Heart right ventricle (tissue), 16 donors: ENCODE measurements at regions of chr5 and their contacts with region 1.

Region 1: DNA sequence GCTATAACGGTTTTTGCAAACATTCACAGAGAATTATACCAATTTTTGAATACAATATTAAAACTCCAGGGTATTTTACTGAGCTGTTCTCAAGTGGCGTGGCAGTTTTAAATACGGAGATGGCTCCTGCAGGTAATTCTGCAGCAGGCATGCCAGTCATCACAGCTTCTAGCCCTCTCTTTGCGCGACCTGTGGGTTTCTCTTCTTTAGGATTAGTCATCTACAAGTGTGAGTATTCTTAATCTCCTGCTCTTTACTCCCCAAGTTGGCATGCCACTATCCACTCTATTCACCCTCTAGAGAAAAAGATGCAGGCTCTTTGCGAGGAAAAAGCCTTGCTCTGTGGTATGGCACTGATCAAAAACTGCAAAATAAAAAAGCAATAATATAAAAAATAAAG is 43.9 kb downstream of the ANKRD31 start:
- DNase-seq: no peak
- ATAC-seq: no peak
- H3K4me3 ChIP-seq: no peak overlapping the region
- H3K27ac ChIP-seq: no peak overlapping the region
- H3K4me1 ChIP-seq: no peaks in the 10 kb centered on the region
- H3K27me3 ChIP-seq: no peaks in the 10 kb centered on the region
- CTCF ChIP-seq: no peak

Region 2: GRCh38 chr5:74786867-74787266 is 405.9 kb before region 1 on chr5:
- intact Hi-C with region 1: no loop called
- DNase-seq: no peak
- ATAC-seq: no peak
- H3K4me3 ChIP-seq: no peak overlapping the region
- H3K27ac ChIP-seq: no peak overlapping the region
- H3K4me1 ChIP-seq: no peaks in the 10 kb centered on the region
- H3K27me3 ChIP-seq: no peaks in the 10 kb centered on the region
- CTCF ChIP-seq: no peak

Region 3: DNA sequence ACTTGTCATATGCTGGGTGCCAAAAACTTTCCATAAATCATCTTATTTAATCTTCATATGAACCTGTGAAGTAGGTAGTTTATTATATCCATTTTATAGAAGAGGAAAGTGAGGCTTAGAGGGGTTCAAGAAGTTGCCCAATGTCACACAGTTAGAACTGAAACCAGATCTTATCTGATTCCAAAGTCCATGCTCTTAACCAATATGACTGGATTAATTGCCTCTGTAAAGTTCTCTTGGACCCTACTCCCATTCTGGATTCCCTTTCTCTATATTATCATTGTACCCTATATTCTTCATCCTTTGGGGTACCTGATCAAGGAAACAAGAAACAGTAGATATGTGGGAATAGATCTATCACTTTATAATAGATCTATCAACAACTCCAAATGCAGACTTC is 75.9 kb before region 1 on chr5:
- intact Hi-C with region 1: loop called in 1 of 10 experiments (anchors 2 kb)
- DNase-seq: no peak
- ATAC-seq: no peak
- H3K4me3 ChIP-seq: no peak overlapping the region
- H3K27ac ChIP-seq: no peak overlapping the region
- H3K4me1 ChIP-seq: no peaks in the 10 kb centered on the region
- H3K27me3 ChIP-seq: no peaks in the 10 kb centered on the region
- CTCF ChIP-seq: no peak

Region 4: DNA sequence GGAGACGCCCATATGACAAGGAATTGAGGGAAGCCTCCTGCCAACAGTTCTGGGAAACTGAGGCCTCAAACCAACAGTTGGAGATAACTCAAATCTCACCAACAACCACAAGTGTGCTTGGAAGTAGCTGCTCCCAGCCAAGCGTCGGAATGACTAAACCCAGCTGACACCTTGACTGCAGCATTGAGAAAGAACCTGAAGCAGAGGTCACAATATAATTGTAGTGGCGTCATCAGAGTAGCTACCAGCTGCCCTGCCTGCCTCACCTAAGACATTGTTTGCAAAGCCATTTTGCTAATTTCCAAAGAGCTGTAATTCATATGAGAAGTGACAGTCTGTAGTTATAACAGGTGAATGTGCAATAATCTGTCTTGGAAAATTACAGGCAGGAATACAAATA is 84.7 kb after region 1 on chr5:
- intact Hi-C with region 1: no loop called
- DNase-seq: no peak
- ATAC-seq: no peak
- H3K4me3 ChIP-seq: no peak overlapping the region
- H3K27ac ChIP-seq: no peak overlapping the region
- H3K4me1 ChIP-seq: no peaks in the 10 kb centered on the region
- H3K27me3 ChIP-seq: peaks cover 0 to 5% (median 0%) of the 10 kb centered on the region in 7 donors
- CTCF ChIP-seq: no peak